ENCODE measurements at regions of chr16 and their contacts with region 1.

Region 1: DNA sequence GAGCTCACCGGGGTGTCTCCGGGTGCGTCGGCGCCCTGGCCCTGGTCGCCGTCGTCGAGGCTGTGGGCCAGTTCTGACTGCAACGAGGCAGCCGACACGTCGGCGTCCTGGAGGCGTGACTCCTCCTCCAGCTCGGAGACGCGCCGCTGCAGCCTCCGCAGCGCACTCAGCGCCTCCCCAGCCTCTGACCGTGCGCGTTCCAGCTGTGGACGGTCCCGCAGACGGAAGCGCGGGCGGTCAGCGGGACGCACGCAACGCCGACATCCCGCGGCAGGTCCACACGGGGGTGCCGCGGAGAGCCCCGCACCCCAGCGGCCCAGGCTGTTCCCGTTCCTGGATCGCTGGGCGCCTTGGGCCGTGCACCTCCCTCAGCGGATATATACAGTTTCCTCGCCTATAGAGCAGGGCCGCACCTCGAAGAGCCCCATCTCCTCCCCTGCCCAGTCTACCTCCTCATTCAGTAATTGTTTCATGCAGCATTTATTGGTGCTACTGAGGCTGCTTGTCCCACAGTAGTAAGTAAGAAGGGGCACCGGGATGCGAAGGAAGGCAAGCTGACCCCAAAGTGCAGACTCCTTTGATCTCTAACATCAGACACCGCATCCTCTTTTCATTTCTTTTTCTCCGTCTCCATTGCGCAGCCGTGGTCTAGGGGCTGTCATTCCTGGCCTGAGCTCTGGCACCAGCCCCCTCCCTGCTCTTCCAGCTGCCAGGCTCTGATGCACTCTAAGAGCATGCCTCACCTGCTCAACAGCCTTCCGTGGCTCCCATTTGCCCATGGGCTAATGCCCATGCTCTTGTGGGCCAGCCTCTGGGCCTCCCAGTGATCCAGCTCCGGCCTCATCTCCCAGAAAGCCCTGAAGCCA is 5.9 kb downstream of the THOC6 start:
- DNase-seq: peak in 4 of 9 experiments; percentile 26 to 64 (median 42)
- ATAC-seq: peak; percentile 15
- H3K4me3 ChIP-seq: peak overlapping the region in 1 of 2 experiments; percentile 28
- H3K4me3 Mint-ChIP-seq: peak overlapping the region; percentile 66
- H3K27ac ChIP-seq: no peak overlapping the region
- H3K27ac Mint-ChIP-seq: no peak overlapping the region
- H3K4me1 ChIP-seq: peaks cover 33% of the 10 kb centered on the region
- H3K4me1 Mint-ChIP-seq: peaks cover 18% of the 10 kb centered on the region
- H3K27me3 ChIP-seq: peaks cover 20 to 30% of the 10 kb centered on the region in 2 experiments
- H3K27me3 Mint-ChIP-seq: peaks cover 38% of the 10 kb centered on the region
- CTCF ChIP-seq: no peak

Region 2: GRCh38 chr16:3045357-3045728 is 15.6 kb after region 1 on chr16:
- CTCF ChIA-PET with region 1: interaction called, 106 read pairs
- POLR2A ChIA-PET with region 1: interaction called, 21 read pairs
- intact Hi-C with region 1: no loop called
- DNase-seq: peak in 5 of 9 experiments; percentile 38 to 56 (median 49)
- ATAC-seq: peak; percentile 69
- H3K4me3 ChIP-seq: peak overlapping the region; percentile 31 to 55
- H3K4me3 Mint-ChIP-seq: peak overlapping the region; percentile 80
- H3K27ac ChIP-seq: no peak overlapping the region
- H3K27ac Mint-ChIP-seq: peak overlapping the region; percentile 22
- H3K4me1 ChIP-seq: peaks cover 20% of the 10 kb centered on the region
- H3K4me1 Mint-ChIP-seq: peaks cover 20% of the 10 kb centered on the region
- H3K27me3 ChIP-seq: peaks cover 26 to 46% of the 10 kb centered on the region in 2 experiments
- H3K27me3 Mint-ChIP-seq: peaks cover 26% of the 10 kb centered on the region
- CTCF ChIP-seq: no peak

Region 3: DNA sequence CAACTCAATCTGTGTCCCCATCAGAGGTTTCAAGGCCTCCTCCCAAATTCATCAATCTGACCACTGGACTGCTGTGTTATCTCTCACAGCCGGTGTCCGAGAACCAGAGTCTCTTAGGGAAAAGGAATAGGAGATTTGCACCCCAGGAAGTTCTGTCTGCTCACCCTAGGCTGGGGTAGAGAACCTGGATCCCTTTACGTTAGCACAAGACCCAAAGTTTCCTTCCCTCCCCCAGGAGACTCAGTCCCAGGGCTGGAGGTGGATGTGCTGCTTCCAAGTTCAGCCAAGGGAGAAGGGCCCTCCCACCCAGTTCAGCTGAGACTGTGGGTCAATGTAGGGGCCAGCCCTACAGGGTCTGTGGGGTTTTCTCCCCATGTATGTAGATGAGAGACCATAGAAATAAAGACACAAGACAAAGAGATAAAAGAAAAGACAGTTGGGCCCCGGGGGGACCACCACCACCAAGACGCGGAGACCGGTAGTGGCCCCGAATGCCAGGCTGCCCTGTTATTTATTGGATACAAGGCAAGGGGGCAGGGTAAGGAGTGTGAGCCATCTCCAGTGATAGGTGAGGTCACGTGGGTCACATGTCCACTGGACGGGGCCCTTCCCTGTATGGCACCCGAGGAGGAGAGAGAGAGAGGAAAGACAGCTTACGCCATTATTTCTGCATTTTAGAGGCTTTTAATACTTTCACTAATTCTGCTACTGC is 135.5 kb after region 1 on chr16:
- CTCF ChIA-PET with region 1: interaction called, 17 read pairs
- POLR2A ChIA-PET with region 1: no interaction called
- intact Hi-C with region 1: loop called in 1 of 2 experiments (anchors 1 kb)
- DNase-seq: no peak
- ATAC-seq: peak; percentile 16
- H3K4me3 ChIP-seq: peak overlapping the region in 1 of 2 experiments; percentile 31
- H3K4me3 Mint-ChIP-seq: peak overlapping the region; percentile 42
- H3K27ac ChIP-seq: peak overlapping the region in 1 of 2 experiments; percentile 36
- H3K27ac Mint-ChIP-seq: peak overlapping the region; percentile 58
- H3K4me1 ChIP-seq: peaks cover 7% of the 10 kb centered on the region
- H3K4me1 Mint-ChIP-seq: peaks cover 11% of the 10 kb centered on the region
- H3K27me3 ChIP-seq: peaks cover 0 to 2% of the 10 kb centered on the region in 2 experiments
- H3K27me3 Mint-ChIP-seq: no peaks in the 10 kb centered on the region
- CTCF ChIP-seq: no peak

Region 4: GRCh38 chr16:3173892-3174617 is 144.3 kb after region 1 on chr16:
- CTCF ChIA-PET with region 1: interaction called, 17 read pairs
- POLR2A ChIA-PET with region 1: no interaction called
- intact Hi-C with region 1: no loop called
- DNase-seq: peak in 1 of 9 experiments; percentile 38
- ATAC-seq: peak; percentile 7
- H3K4me3 ChIP-seq: no peak overlapping the region
- H3K4me3 Mint-ChIP-seq: peak overlapping the region; percentile 26
- H3K27ac ChIP-seq: no peak overlapping the region
- H3K27ac Mint-ChIP-seq: no peak overlapping the region
- H3K4me1 ChIP-seq: peaks cover 44% of the 10 kb centered on the region
- H3K4me1 Mint-ChIP-seq: peaks cover 39% of the 10 kb centered on the region
- H3K27me3 ChIP-seq: peaks cover 30 to 54% of the 10 kb centered on the region in 2 experiments
- H3K27me3 Mint-ChIP-seq: peaks cover 47% of the 10 kb centered on the region
- CTCF ChIP-seq: no peak

Measured in CD8-positive, alpha-beta T cell (primary cell).